ENCODE measurements at regions of chr14 and their contacts with region 1.

Region 1: DNA sequence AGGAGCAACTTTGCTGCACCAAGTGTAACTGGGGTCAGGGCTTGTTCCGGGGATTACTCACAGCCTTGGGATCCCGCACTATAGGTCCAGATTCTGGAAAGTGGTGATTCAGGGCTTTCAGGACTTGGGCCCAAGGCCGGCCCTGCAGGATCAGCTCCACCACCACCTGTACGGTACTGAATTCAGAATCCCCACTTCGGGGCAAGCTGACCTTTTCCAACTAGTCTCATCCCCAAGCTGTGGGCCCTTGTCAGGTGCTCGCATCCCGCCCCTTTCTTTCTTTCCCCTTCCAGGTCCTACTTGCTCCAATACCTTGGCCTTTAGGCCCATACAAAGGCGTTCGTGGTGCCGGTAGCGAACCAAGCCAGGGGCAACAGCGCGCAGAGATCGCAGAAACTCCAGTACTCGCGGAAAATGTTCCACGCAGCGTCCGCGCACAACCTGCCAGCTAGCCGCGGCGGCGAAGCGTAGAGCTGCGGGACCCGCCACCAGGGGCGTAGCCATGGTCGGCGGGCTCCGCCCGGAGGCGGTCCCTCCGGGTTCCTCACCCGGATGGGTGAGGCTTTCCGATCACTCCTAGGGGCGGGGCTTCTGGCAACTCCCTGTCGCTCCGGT is 487 bp downstream of the TINF2 start:
- DNase-seq: peak; percentile 95
- ATAC-seq: peak; percentile 85
- H3K4me3 Mint-ChIP-seq: peak overlapping the region; percentile 93
- H3K27ac Mint-ChIP-seq: peak overlapping the region; percentile 97
- H3K4me1 Mint-ChIP-seq: peaks cover 13% of the 10 kb centered on the region
- H3K27me3 Mint-ChIP-seq: peaks cover 12% of the 10 kb centered on the region
- CTCF ChIP-seq: no peak

Region 2: DNA sequence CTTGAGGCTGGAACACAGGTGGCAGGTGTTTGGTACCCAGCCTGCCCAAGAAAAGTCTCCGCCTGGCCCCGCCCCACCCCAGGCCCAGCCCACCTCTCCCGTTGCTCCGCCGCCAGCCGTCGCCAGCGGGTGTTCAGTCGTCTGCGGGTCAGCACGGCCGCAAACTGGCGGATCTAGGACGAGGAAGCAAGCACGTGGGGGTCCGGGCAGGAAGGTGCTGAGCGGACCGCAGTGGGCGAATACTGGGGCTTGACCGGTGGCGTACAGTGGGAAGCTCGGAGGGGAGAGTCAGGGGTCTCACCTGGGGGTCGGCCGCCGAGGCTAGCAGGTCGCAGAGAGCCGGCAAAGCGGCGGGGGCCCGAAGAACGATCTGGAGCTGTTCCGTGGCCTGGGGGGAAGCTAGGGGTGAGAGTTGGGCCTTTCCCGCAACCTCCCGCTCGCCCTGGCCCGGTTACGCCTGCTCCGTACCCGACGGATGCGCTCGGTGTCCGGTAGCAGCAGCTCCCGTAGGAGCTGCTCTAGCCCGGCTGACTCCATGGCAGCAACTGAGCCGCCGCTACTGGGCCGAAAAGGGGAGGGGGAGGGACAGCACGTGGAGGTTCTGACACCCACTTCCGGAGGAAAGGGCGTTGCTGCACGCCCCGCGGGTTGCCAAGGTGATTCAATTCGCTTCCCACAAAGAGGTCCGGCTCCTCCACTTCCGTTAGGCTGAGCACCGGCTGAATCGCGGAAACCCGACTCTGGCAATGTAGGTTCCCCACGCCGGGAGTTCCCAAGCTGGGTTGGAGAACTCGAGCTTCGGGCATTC is 53.5 kb before region 1 on chr14 and contains the start of gene IPO4:
- CTCF ChIA-PET with region 1: interaction called, 13 read pairs
- POLR2A ChIA-PET with region 1: interaction called, 7 read pairs
- DNase-seq: peak; percentile 97
- ATAC-seq: peak; percentile 88
- H3K4me3 Mint-ChIP-seq: peak within 1 kb of the TSS; percentile 89
- H3K27ac Mint-ChIP-seq: peak within 1 kb of the TSS; percentile 76; the same call in 1 of the 2 replicates
- H3K4me1 Mint-ChIP-seq: peaks cover 16% of the 10 kb centered on the region
- H3K27me3 Mint-ChIP-seq: no peaks in the 10 kb centered on the region
- CTCF ChIP-seq: no peak
- total RNA-seq, gene IPO4: 87.6 to 128 TPM (median 91.2 TPM) in 3 replicates

Region 3: GRCh38 chr14:24262821-24263761 is 21.2 kb after region 1 on chr14 and contains the start of gene TGM1:
- CTCF ChIA-PET with region 1: interaction called, 17 read pairs
- POLR2A ChIA-PET with region 1: interaction called, 3 read pairs
- DNase-seq: no peak
- ATAC-seq: peak; percentile 71
- H3K4me3 Mint-ChIP-seq: no peak within 1 kb of the TSS
- H3K27ac Mint-ChIP-seq: no peak within 1 kb of the TSS
- H3K4me1 Mint-ChIP-seq: no peaks in the 10 kb centered on the region
- H3K27me3 Mint-ChIP-seq: no peaks in the 10 kb centered on the region
- CTCF ChIP-seq: no peak
- total RNA-seq, gene TGM1: 2.5 to 5.2 TPM (median 4.4 TPM) in 3 replicates

Region 4: GRCh38 chr14:24271134-24271833 is 29.3 kb after region 1 on chr14 and contains the start of gene RABGGTA:
- CTCF ChIA-PET with region 1: interaction called, 77 read pairs
- POLR2A ChIA-PET with region 1: interaction called, 20 read pairs
- DNase-seq: peak; percentile 95
- ATAC-seq: peak; percentile 94
- H3K4me3 Mint-ChIP-seq: peak within 1 kb of the TSS; percentile 72
- H3K27ac Mint-ChIP-seq: peak within 1 kb of the TSS; percentile 87
- H3K4me1 Mint-ChIP-seq: peaks cover 16% of the 10 kb centered on the region
- H3K27me3 Mint-ChIP-seq: no peaks in the 10 kb centered on the region
- CTCF ChIP-seq: 0 out of 2 replicates have a peak, but pooled peaks have one; percentile 15
- total RNA-seq, gene RABGGTA: 22.3 to 28.1 TPM (median 27.1 TPM) in 3 replicates

Region 5: GRCh38 chr14:24299255-24300195 is 57.6 kb after region 1 on chr14 and contains the starts of genes DHRS1 and NOP9:
- CTCF ChIA-PET with region 1: interaction called, 165 read pairs
- POLR2A ChIA-PET with region 1: interaction called, 20 read pairs
- DNase-seq: peak; percentile 94
- ATAC-seq: peak; percentile 83
- H3K4me3 Mint-ChIP-seq: peak within 1 kb of the TSS; percentile 91
- H3K27ac Mint-ChIP-seq: peak within 1 kb of the TSS; percentile 89
- H3K4me1 Mint-ChIP-seq: peaks cover 19% of the 10 kb centered on the region
- H3K27me3 Mint-ChIP-seq: 0 out of 2 replicates have a peak, but pooled peaks cover 3% of the 10 kb centered on the region
- CTCF ChIP-seq: no peak
- total RNA-seq, gene DHRS1: 13.9 to 16.7 TPM (median 15.4 TPM) in 3 replicates
- total RNA-seq, gene NOP9: 34.3 to 44.4 TPM (median 35.0 TPM) in 3 replicates

Measured in WTC11 (cell line).